OCI-LY7 (cell line): ENCODE measurements at regions of chr4 and their contacts with region 1.

Region 1: DNA sequence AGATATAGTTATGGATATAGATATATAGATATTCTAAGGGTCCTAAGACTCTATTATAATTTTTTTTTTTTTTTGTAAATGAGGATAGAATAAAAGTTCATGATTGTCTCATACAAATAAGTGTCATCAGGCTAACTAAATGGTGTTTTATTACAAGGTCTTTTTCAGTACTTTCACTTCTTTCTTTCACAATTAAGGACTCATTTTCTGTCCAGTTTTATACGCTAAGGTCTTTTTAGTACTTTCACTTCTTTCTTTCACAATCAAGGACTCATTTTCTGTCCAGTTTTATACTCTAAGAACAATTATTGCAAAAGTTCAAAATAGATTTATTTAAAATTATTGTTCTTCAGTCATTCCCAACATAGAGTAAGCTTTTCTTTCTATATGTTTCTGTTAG is 32.7 kb downstream of the RUFY3 start:
- DNase-seq: peak; percentile 70
- H3K4me3 ChIP-seq: peak overlapping the region; percentile 60
- H3K27ac ChIP-seq: peak overlapping the region; percentile 91
- H3K4me1 ChIP-seq: peaks cover 74% of the 10 kb centered on the region
- CTCF ChIP-seq: no peak

Region 2: DNA sequence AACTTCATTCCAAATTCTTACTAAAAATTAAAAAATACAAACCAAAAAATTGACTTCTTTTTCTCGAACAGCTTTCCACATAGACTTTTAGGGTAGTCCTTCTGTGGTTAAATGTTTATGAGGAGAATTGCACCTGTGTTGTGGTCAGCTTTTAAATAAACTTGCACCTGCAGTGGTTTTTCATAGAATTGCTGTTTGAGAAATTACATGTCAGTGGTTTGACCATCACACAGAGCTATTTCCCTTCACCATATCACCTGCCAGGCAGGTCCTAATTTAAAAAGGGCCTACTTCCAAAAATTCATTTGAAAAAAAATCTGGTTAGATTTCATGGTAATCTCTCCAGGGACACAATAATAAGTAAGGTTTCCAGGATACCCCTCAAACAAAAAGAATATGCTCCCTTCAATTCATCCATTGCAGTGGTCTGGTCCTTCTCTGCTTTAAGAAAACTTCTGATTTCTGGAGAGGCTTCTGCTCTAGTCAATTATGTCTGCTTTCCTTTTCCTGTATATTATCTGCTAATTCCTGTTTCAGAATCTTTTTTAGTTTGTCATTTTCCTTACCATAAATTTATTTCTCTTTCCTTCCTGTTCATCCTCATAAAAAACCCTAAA is 76.0 kb before region 1 on chr4:
- CTCF ChIA-PET with region 1: no interaction called
- POLR2A ChIA-PET with region 1: interaction called, 6 read pairs
- intact Hi-C with region 1: loop called (anchors 2 kb)
- DNase-seq: peak; percentile 96
- H3K4me3 ChIP-seq: peak overlapping the region; percentile 44
- H3K27ac ChIP-seq: peak overlapping the region; percentile 97
- H3K4me1 ChIP-seq: peaks cover 88% of the 10 kb centered on the region
- CTCF ChIP-seq: no peak

Region 3: DNA sequence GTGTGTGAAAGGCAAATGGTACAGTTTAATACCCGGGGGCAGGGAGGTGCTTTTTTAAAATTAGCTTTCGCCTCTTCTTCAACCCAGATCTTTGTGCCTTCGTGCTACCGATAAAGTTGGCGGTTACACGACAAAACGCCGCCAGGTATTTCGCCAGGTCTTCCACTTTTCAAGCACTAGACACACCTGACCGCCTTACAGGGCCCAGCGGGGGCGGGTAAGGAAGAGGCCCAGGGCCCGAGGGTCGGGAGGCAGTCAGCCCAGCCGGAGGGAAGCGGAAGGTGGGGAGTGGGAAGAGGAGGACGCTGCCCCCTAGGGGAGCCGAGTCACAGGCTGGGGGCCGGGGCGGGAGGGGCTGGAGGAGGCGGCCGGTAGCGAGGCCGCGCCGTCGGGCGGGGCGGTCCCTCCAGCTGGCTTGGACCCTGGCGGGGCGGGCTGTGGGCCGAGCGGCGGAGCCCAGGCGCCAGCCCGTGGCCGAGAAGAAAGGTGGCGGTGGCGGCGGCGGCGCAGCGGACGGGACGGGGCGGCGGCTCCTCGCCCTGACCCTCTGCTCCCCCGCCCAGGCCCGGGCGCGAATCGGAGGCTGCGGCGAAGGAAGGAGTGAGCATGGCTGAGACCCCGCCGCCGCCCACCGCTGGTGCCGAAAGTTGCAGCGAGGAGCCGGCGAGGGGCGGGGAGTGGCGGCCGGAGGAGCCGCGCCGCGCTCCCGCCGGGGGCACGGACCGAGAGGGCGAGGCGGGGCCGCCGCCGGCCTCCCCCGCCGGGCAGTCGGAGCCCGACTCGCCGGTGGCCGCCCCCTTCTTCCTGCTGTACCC is 49.9 kb before region 1 on chr4:
- CTCF ChIA-PET with region 1: interaction called, 4 read pairs
- POLR2A ChIA-PET with region 1: interaction called, 8 read pairs
- intact Hi-C with region 1: loop called (anchors 2 kb)
- DNase-seq: peak; percentile 85
- H3K4me3 ChIP-seq: peak overlapping the region; percentile 90
- H3K27ac ChIP-seq: peak overlapping the region; percentile 77
- H3K4me1 ChIP-seq: peaks cover 32% of the 10 kb centered on the region
- CTCF ChIP-seq: peak; percentile 71

Region 4: DNA sequence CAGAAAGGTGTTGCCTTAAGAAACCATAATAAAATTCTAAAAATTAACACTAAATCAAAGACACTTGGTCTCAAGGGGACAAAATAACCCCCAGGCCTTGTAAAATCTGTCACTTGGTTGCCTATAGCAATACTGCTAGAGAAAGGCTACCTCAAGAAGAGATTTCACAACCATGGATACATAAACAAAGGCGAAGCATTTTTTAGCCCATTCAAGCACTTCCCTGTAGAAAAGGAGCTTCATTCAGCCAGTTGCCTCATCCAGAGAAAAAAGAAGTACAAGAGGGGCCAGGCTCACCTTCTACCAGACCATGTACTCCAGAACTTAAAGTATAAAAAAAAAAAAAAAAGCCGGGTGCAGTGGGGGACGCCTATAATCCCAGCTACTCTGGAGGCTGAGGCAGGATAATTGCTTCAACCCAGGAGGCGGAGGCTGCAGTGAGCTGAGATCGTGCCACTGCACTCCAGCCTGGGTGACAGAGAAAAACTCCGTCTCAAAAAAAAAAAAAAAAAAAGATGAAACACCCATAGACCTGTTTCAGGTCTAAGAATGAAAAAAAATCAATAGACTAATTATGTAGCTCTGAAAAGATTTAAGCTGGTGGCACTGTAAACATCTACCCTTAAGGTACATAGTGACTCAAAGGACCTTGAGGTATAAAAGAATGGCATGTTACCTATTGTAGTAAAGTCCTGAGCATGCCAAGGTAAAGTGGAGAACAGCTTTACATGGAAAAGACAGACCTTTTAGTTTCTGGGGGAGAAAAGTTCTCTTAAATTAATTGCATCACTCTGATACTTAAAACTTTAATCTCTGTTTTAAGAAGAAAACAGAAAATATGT is 14.8 kb before region 1 on chr4:
- CTCF ChIA-PET with region 1: interaction called, 8 read pairs
- POLR2A ChIA-PET with region 1: interaction called, 38 read pairs
- intact Hi-C with region 1: loop called (anchors 2 kb)
- DNase-seq: no peak
- H3K4me3 ChIP-seq: no peak overlapping the region
- H3K27ac ChIP-seq: no peak overlapping the region
- H3K4me1 ChIP-seq: peaks cover 37% of the 10 kb centered on the region
- CTCF ChIP-seq: no peak

Region 5: DNA sequence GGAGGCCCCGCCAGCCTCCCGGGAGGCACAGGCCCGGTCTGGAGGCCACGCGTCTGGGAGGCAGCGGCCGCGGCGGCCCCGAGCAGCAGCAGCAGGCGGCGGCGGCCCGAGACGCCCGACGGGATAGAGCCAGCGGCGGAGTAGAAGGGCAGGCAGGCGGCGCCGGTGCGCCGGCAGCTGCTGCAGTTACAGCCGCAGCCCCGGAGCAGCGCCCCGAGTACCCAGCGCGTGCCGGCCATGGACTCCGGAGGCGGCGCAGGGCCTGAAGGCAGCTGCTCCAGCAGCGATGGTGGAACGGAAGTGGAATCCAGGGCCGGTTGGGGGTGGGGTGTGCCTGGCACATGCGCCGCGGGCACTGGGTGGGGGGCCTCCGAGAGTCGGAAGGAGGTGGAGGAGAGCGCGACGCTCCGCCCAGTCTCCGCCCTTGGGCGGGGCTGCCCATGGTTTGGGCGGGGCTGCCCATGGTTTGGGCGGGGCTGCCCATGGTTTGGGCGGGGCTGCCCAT is 85.2 kb after region 1 on chr4 and contains the start of gene GRSF1:
- CTCF ChIA-PET with region 1: no interaction called
- POLR2A ChIA-PET with region 1: interaction called, 3 read pairs
- intact Hi-C with region 1: loop called (anchors 5 kb)
- DNase-seq: peak; percentile 97
- H3K4me3 ChIP-seq: peak within 1 kb of the TSS; percentile 73
- H3K27ac ChIP-seq: peak within 1 kb of the TSS; percentile 76
- H3K4me1 ChIP-seq: peaks cover 41% of the 10 kb centered on the region
- CTCF ChIP-seq: peak; percentile 21; the same call in 1 of the 2 replicates
- total RNA-seq, gene GRSF1: 32.8 and 36.7 TPM in 2 replicates

Region 6: GRCh38 chr4:70901984-70902576 is 147.6 kb after region 1 on chr4 and contains the start of gene MOB1B:
- CTCF ChIA-PET with region 1: no interaction called
- POLR2A ChIA-PET with region 1: no interaction called
- intact Hi-C with region 1: loop called (anchors 5 kb)
- DNase-seq: peak; percentile 91
- H3K4me3 ChIP-seq: peak within 1 kb of the TSS; percentile 95
- H3K27ac ChIP-seq: peak within 1 kb of the TSS; percentile 46
- H3K4me1 ChIP-seq: peaks cover 15% of the 10 kb centered on the region
- CTCF ChIP-seq: 0 out of 2 replicates have a peak, but pooled peaks have one; percentile 24
- total RNA-seq, gene MOB1B: 3.9 and 4.7 TPM in 2 replicates

Region 7: GRCh38 chr4:70915874-70916559 is 161.5 kb after region 1 on chr4:
- CTCF ChIA-PET with region 1: no interaction called
- POLR2A ChIA-PET with region 1: no interaction called
- intact Hi-C with region 1: no loop called
- DNase-seq: no peak
- H3K4me3 ChIP-seq: no peak overlapping the region
- H3K27ac ChIP-seq: no peak overlapping the region
- H3K4me1 ChIP-seq: peaks cover 19% of the 10 kb centered on the region
- CTCF ChIP-seq: no peak

Region 8: GRCh38 chr4:70927502-70928137 is 173.2 kb after region 1 on chr4:
- CTCF ChIA-PET with region 1: no interaction called
- POLR2A ChIA-PET with region 1: interaction called, 5 read pairs
- intact Hi-C with region 1: loop called (anchors 2 kb)
- DNase-seq: peak; percentile 81
- H3K4me3 ChIP-seq: peak overlapping the region; percentile 63
- H3K27ac ChIP-seq: peak overlapping the region; percentile 88
- H3K4me1 ChIP-seq: peaks cover 94% of the 10 kb centered on the region
- CTCF ChIP-seq: peak; percentile 48